ENCODE measurements at regions of chr3 and their contacts with region 1.

Region 1: DNA sequence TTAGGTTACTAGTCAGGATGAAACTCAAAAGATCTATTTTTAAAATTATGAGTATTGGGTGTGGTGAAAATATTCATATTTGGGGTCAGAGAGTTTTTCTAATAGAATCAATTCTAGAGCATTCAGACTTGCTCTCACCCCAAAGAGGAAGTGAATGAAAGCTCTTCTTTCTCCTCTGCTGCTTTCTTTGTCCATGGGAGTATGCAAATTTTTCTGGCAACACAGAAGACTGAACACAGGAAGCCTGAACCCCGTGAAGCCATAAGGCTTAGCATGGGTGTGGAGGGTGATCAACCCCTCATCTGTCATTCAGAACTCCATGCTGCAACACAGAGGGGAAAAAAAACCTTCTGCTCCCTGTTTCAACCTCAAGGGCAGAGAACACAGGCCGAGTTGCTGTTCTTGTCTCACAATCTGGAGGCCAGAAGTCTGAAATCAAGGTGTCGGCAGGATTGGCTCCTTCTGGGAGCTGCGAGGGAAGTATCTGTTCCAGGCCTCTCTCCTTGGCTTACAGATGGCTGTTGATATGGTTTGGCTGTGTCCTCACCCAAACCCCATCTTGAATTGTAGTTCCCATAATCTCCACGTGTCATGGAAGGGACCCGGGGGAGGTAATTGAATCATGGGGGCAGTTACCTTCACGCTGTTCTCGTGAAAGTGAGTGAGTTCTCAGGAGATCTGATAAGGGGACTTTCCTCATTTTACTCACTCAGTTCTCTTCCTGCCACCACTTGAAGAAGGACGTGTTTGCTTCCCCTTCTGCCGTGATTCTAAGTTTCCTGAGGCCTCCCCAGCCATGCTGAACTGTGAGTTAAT is 33.7 kb upstream of the CD47 start:
- DNase-seq: peak; percentile 56
- ATAC-seq: peak; percentile 37
- H3K4me3 Mint-ChIP-seq: peak overlapping the region; percentile 96
- H3K27ac Mint-ChIP-seq: peak overlapping the region; percentile 99
- H3K4me1 Mint-ChIP-seq: peaks cover 51% of the 10 kb centered on the region
- H3K27me3 Mint-ChIP-seq: no peaks in the 10 kb centered on the region

Region 2: DNA sequence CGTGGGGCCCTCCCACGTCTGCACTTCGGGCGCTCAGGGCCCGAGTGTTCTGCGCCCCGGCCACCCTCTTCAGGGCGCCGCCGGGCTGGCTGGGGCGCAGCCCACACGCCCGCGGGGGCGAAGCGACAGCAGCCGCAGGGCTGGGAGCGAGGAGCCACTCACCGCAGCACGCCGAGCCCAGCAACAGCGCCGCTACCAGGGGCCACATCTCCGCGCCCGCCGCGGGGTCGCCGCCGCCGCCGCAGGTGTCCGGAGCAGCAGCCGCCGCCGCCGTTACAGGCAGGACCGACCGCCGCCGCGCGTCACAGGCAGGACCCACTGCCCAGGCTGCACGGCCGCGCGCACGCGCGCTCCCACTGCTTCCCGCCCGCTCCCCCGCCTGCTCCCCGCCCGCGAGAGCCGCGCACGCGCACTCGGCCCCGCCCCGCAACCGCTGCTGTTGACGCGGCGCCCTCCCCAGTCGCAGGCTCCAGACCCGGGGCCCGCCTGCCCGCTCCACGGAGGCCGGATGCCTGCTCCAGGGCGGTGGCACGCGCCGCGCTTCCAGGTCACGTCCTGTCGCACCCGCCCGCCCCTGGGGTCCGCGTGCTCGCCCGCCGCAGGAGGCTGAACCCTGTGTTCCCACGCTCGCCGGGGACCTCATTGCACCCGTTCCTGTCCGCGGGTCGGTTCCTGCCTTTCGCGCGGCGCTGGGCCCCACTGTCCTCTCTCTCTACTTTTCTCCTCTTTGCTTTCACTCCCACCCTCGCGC is 33.7 kb before region 1 on chr3 and contains the start of gene CD47:
- POLR2A ChIA-PET with region 1: interaction called, 50 read pairs
- DNase-seq: peak; percentile 99
- ATAC-seq: peak; percentile 87
- H3K4me3 Mint-ChIP-seq: peak within 1 kb of the TSS; percentile 99
- H3K27ac Mint-ChIP-seq: peak within 1 kb of the TSS; percentile 99
- H3K4me1 Mint-ChIP-seq: peaks cover 31% of the 10 kb centered on the region
- H3K27me3 Mint-ChIP-seq: no peaks in the 10 kb centered on the region
- total RNA-seq, gene CD47: 154 to 157 TPM

Region 3: GRCh38 chr3:108100906-108101660 is 23.5 kb before region 1 on chr3:
- POLR2A ChIA-PET with region 1: interaction called, 22 read pairs
- DNase-seq: no peak
- ATAC-seq: peak; percentile 85
- H3K4me3 Mint-ChIP-seq: peak overlapping the region; percentile 28
- H3K27ac Mint-ChIP-seq: peak overlapping the region; percentile 26
- H3K4me1 Mint-ChIP-seq: peaks cover 36% of the 10 kb centered on the region
- H3K27me3 Mint-ChIP-seq: peaks cover 1% of the 10 kb centered on the region

Region 4: DNA sequence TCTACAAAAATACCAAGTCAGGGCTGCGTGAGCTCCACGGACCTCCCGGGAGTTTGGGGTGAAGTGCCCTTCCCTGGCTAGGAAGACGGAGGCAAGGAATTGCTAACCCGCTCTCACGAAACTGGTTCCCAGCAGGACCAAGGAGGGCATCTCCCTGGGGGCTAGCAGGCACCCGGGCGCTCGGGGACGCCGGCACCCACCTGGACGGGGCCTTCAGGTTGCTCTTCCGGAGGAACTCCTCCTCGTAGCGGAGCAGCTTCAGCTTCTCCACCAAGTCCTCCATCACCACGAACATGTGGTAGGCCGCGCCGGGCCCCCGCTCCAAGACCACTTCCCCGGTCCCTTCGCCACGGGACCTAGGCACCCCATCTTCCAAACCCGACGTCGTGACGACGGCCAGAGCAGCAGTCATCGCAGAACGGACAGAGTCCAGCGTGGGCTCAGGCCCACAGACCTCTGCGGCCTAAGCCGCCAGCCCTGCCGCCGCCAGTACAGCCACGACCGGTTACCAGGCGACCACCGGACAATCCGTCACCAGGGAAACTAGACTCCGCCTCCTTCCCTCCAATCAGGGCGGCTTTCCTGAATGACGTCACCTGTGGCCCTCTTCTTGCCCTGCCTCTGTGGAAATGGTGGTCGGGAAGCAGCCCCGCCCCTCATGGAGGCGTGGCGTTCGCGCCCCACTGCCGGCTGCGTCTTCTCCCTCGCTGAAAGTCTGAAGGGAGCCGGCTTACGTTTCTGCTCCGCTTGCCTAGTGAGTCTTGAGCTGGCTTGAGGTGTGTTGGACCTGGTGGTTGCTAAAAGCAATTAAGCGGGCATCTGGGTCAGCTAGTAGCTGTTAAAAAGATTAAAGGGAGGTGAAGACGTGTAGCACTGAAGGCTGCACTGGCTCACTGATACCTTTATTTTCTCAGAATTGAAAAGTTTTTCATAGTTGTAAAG is 97.6 kb after region 1 on chr3 and contains the start of gene IFT57:
- POLR2A ChIA-PET with region 1: interaction called, 19 read pairs
- DNase-seq: peak; percentile 95
- ATAC-seq: peak; percentile 92
- H3K4me3 Mint-ChIP-seq: peak within 1 kb of the TSS; percentile 95
- H3K27ac Mint-ChIP-seq: peak within 1 kb of the TSS; percentile 98
- H3K4me1 Mint-ChIP-seq: peaks cover 34% of the 10 kb centered on the region
- H3K27me3 Mint-ChIP-seq: no peaks in the 10 kb centered on the region
- total RNA-seq, gene IFT57: 22.0 to 26.9 TPM

Region 5: DNA sequence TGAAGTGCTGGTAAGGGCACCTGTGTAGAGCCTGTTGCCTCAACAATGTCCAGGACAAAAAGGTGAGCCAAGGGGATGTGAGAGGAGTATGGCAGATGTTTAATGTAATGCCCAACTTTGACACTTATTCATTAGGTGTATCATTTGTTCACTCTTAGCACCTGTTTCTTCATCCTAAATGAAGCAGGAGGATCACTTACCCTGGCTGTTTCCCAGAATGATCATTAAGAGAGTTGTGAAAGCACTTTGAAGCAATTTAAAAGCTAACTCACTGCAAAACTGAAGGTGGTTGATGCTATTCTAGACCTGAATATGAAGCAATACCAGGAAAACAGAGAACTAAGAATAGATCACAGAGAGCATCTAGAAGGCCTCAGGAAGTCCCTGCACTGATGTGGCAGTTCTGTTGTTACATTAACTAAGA is 168.4 kb after region 1 on chr3:
- POLR2A ChIA-PET with region 1: interaction called, 13 read pairs
- DNase-seq: no peak
- ATAC-seq: peak; percentile 89
- H3K4me3 Mint-ChIP-seq: peak overlapping the region; percentile 60
- H3K27ac Mint-ChIP-seq: peak overlapping the region; percentile 85
- H3K4me1 Mint-ChIP-seq: peaks cover 57% of the 10 kb centered on the region
- H3K27me3 Mint-ChIP-seq: no peaks in the 10 kb centered on the region

Measured in activated naive CD8-positive, alpha-beta T cell treated with anti-CD3 and anti-CD28 coated beads, Interleukin-2, amount 10 ng/mL, durations not matched to agents 7 days and 5 days (primary cell).